ENCODE measurements at regions of chr21 and their contacts with region 1.

Region 1: GRCh38 chr21:29091032-29091431 is 17.6 kb upstream of the CCT8 start:
- DNase-seq: no peak
- ATAC-seq: no peak

Region 2: GRCh38 chr21:29372063-29372802 is 281.2 kb after region 1 on chr21:
- intact Hi-C with region 1: loop called in 1 of 2 experiments (anchors 5 kb)
- DNase-seq: peak in 1 of 2 donors; percentile 33
- ATAC-seq: peak; percentile 89

Measured in left colon (tissue), 2 donors.